Naive thymus-derived CD4-positive, alpha-beta T cell (primary cell): ENCODE measurements at regions of chrX and their contacts with region 1.

Region 1: GRCh38 chrX:19791562-19791961 is 95.8 kb downstream of the SH3KBP1 start:
- DNase-seq: peak in 1 of 9 donors; percentile 16
- ATAC-seq: peak; percentile 57
- H3K4me3 ChIP-seq: peak overlapping the region; percentile 35
- H3K4me3 Mint-ChIP-seq: peak overlapping the region; percentile 27 to 72 (median 52)
- H3K27ac ChIP-seq: peak overlapping the region; percentile 41
- H3K27ac Mint-ChIP-seq: peak overlapping the region in 8 of 9 donors; percentile 10 to 87 (median 78)
- H3K4me1 ChIP-seq: peaks cover 33 to 39% of the 10 kb centered on the region in 2 donors
- H3K4me1 Mint-ChIP-seq: peaks cover 21 to 84% (median 72%) of the 10 kb centered on the region in 7 donors
- H3K27me3 ChIP-seq: no peaks in the 10 kb centered on the region
- H3K27me3 Mint-ChIP-seq: no peaks in the 10 kb centered on the region

Region 2: DNA sequence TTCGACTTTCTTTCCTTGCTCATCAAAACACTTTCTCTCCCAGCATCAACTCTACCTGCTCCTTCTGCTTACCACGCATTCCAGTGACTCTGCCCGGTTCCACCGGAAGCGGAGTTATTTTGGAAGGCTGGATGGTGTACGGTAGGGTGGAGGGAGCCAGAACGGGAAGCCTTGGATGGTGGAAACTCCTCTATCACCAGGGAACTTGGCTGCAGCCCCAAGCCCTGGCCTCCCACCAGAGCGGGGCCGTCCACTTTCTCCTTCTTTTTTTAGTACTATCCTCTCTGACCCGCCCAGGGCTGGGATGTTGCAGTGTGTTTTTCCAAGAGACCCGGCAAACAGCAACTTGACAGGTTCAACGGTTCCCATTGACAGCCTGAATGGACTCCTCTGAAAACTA is 696.9 kb before region 1 on chrX:
- CTCF ChIA-PET with region 1: no interaction called
- POLR2A ChIA-PET with region 1: no interaction called
- intact Hi-C with region 1: no loop called
- DNase-seq: no peak
- ATAC-seq: no peak
- H3K4me3 ChIP-seq: no peak overlapping the region
- H3K4me3 Mint-ChIP-seq: no peak overlapping the region
- H3K27ac ChIP-seq: no peak overlapping the region
- H3K27ac Mint-ChIP-seq: no peak overlapping the region
- H3K4me1 ChIP-seq: no peaks in the 10 kb centered on the region
- H3K4me1 Mint-ChIP-seq: no peaks in the 10 kb centered on the region
- H3K27me3 ChIP-seq: no peaks in the 10 kb centered on the region
- H3K27me3 Mint-ChIP-seq: peaks cover 0 to 4% (median 0%) of the 10 kb centered on the region in 5 donors

Region 3: DNA sequence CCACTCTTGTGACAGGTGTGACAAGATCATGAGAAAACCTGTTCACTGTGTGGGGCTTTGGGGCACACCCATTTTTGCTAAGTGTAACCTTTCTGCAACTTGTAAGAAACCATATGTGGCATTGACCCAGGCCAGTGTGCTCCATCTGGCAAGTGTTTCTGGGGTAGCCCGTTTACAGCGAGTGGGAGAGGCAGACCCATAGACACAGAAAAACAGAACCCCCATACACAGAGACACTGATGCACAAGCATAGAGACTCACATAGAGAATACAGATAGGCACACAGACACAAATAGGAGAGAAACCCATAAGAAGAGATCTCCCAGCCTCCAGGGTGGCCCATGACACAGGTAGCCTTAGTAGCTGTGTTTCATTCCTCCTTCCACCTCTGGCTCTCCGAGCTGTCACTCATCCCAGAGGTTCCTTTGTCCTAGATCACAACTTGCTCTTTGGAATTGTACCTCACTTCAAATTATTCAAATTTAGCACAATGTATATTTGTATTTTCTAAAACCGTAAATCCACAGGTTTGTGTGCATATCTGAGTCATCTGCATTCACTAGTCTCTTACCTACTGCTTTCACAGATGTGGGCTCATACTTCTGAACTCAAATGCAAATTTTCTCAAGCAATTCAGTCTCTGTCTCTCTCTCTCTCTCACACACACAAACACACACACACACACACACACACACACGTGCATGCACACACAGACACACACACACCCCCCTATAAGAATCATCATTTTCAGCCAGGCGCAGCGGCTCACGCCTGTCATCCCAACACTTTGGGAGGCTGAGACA is 18.5 kb before region 1 on chrX:
- CTCF ChIA-PET with region 1: interaction called, 3 read pairs
- POLR2A ChIA-PET with region 1: interaction called, 3 read pairs
- intact Hi-C with region 1: loop called (anchors 2 kb)
- DNase-seq: no peak
- ATAC-seq: peak; percentile 36
- H3K4me3 ChIP-seq: no peak overlapping the region
- H3K4me3 Mint-ChIP-seq: peak overlapping the region; percentile 58 to 76 (median 66)
- H3K27ac ChIP-seq: peak overlapping the region; percentile 55
- H3K27ac Mint-ChIP-seq: peak overlapping the region; percentile 78 to 95 (median 88)
- H3K4me1 ChIP-seq: peaks cover 56 to 59% of the 10 kb centered on the region in 2 donors
- H3K4me1 Mint-ChIP-seq: peaks cover 26 to 85% (median 68%) of the 10 kb centered on the region in 7 donors
- H3K27me3 ChIP-seq: no peaks in the 10 kb centered on the region
- H3K27me3 Mint-ChIP-seq: no peaks in the 10 kb centered on the region

Region 4: GRCh38 chrX:19805046-19805690 is 13.6 kb after region 1 on chrX:
- CTCF ChIA-PET with region 1: interaction called, 5 read pairs
- POLR2A ChIA-PET with region 1: interaction called, 10 read pairs
- intact Hi-C with region 1: no loop called
- DNase-seq: peak in 7 of 9 donors; percentile 29 to 66 (median 46)
- ATAC-seq: peak; percentile 75
- H3K4me3 ChIP-seq: peak overlapping the region; percentile 57
- H3K4me3 Mint-ChIP-seq: peak overlapping the region; percentile 56 to 78 (median 75)
- H3K27ac ChIP-seq: peak overlapping the region; percentile 61
- H3K27ac Mint-ChIP-seq: peak overlapping the region; percentile 81 to 95 (median 89)
- H3K4me1 ChIP-seq: peaks cover 42 to 46% of the 10 kb centered on the region in 2 donors
- H3K4me1 Mint-ChIP-seq: peaks cover 0 to 66% (median 54%) of the 10 kb centered on the region in 7 donors
- H3K27me3 ChIP-seq: no peaks in the 10 kb centered on the region
- H3K27me3 Mint-ChIP-seq: no peaks in the 10 kb centered on the region

Region 5: DNA sequence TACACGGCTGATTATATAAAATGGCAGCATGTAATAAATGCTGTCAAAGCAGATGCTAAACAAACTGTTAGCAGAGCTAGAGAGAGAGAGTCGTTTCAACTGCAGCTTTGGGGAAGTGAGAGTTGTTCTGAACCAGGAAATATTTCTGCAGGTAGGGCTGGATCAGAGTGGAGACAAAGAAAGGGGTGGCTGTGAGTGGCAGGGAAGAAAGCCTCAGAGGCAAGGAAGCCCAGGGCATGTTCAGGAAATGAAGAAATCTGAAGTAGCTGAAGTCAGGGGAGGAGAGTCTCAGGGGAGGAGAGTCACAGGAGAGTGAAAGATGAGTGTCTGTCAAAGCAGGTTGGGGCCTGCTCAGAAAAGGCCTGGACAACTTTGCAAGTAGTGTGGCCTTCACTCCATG is 523.6 kb after region 1 on chrX:
- CTCF ChIA-PET with region 1: no interaction called
- POLR2A ChIA-PET with region 1: no interaction called
- intact Hi-C with region 1: no loop called
- DNase-seq: no peak
- ATAC-seq: no peak
- H3K4me3 ChIP-seq: no peak overlapping the region
- H3K4me3 Mint-ChIP-seq: peak overlapping the region in 3 of 10 donors; percentile 0 to 19 (median 14)
- H3K27ac ChIP-seq: no peak overlapping the region
- H3K27ac Mint-ChIP-seq: peak overlapping the region; percentile 2 to 85 (median 61)
- H3K4me1 ChIP-seq: no peaks in the 10 kb centered on the region
- H3K4me1 Mint-ChIP-seq: peaks cover 9 to 37% (median 19%) of the 10 kb centered on the region in 7 donors
- H3K27me3 ChIP-seq: no peaks in the 10 kb centered on the region
- H3K27me3 Mint-ChIP-seq: peaks cover 0 to 2% (median 0%) of the 10 kb centered on the region in 5 donors